ENCODE measurements at regions of chr1 and their contacts with region 1.

Region 1: DNA sequence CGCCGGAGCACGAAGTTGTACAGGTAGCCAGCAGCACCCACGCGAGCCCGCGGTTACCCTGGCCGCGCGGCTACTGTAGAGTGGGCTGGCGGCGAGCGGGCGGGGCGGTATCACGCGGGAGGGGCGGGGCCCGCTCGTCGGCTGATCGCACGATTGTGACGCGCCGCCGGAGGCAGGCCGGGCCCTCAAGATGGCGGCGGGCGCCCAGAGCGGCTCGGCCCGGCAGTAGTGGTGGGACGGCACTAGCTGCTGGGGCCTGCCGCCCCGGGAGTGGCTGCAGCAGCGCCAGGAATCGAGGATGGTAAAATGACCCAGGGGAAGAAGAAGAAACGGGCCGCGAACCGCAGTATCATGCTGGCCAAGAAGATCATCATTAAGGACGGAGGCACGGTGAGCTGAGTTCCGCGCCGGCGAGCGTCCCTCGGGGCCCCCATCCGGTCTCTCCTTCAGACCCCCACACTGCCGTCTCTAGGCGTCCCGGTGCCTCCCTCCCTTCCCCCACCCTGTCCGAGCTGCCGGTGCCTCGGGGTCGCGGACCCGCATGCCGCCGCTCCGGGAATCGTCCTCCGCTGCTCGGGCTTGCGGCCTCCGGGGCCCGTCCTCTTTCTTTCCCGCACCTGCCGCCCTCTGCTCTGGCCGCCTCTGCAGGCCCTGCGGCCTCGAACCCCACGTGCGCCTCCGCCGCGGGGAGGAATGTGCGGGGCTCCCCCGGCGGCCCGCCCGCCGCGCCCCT is 68.3 kb downstream of the SLC35A3 start:
- DNase-seq: peak; percentile 59 to 95
- H3K4me3 ChIP-seq: peak overlapping the region; percentile 93 to 94
- H3K27ac ChIP-seq: peak overlapping the region; percentile 97 to 98
- H3K4me1 ChIP-seq: peaks cover 4 to 9% of the 10 kb centered on the region in 2 donors
- H3K27me3 ChIP-seq: no peaks in the 10 kb centered on the region
- CTCF ChIP-seq: no peak

Region 2: GRCh38 chr1:99808391-99809115 is 229.5 kb before region 1 on chr1:
- intact Hi-C with region 1: loop called (anchors 5 kb)
- DNase-seq: peak in 1 of 2 donors; percentile 62
- H3K4me3 ChIP-seq: peak overlapping the region in 1 of 2 donors; percentile 52
- H3K27ac ChIP-seq: no peak overlapping the region
- H3K4me1 ChIP-seq: peaks cover 0 to 3% of the 10 kb centered on the region in 2 donors
- H3K27me3 ChIP-seq: no peaks in the 10 kb centered on the region
- CTCF ChIP-seq: peak; percentile 54 to 64 (median 63)

Region 3: GRCh38 chr1:100895540-100896483 is 857.7 kb after region 1 on chr1 and contains the start of gene SLC30A7:
- intact Hi-C with region 1: loop called (anchors 2 kb)
- DNase-seq: peak; percentile 84 to 97
- H3K4me3 ChIP-seq: peak within 1 kb of the TSS; percentile 77 to 79
- H3K27ac ChIP-seq: peak within 1 kb of the TSS; percentile 96 to 97
- H3K4me1 ChIP-seq: peaks cover 0 to 13% of the 10 kb centered on the region in 2 donors
- H3K27me3 ChIP-seq: no peaks in the 10 kb centered on the region
- CTCF ChIP-seq: no peak
- total RNA-seq, gene SLC30A7: 12.1 TPM

Measured in ascending aorta (tissue), 2 donors.